Right lobe of liver (tissue), 6 donors: ENCODE measurements at regions of chr7 and their contacts with region 1.

Region 1: DNA sequence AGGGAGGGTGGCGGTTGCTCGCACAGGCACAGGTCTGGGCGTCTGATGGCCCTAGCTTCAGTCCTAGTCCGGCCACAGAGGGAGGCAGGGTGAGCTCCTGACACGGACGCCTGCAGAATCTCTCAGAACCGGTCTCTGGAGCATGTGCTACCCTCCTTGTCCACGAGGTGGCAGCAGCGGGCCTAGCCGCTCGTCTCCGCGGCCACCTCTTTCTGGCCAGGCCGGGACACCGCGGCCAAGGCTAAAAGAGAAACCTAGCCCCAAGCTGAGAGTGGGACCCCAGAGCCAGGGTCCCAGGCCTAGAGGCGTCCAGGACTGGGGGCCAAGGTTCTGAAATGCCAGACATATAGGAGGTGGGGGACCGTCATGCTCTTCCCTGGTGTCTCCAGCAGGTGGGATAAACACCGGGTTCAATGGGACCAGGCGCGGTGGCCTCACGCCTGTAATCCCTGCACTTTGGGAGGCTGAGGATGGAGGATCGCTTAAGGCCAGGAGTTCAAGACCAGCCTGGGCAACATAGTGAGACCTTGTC is 3.2 kb upstream of the LAT2 start:
- DNase-seq: peak; percentile 88 to 90 (median 89)
- ATAC-seq: peak; percentile 96 to 97 (median 97)
- H3K4me3 ChIP-seq: peak overlapping the region in 2 of 3 donors; percentile 11 to 28
- H3K27ac ChIP-seq: no peak overlapping the region
- H3K4me1 ChIP-seq: no peaks in the 10 kb centered on the region
- H3K27me3 ChIP-seq: no peaks in the 10 kb centered on the region
- CTCF ChIP-seq: peak; percentile 97 to 98 (median 98)
- POLR2A ChIP-seq: no peak

Region 2: GRCh38 chr7:73865738-73866445 is 340.8 kb before region 1 on chr7:
- intact Hi-C with region 1: loop called in 1 of 2 experiments (anchors 10 kb)
- DNase-seq: no peak
- ATAC-seq: peak; percentile 53 to 70 (median 62)
- H3K4me3 ChIP-seq: no peak overlapping the region
- H3K27ac ChIP-seq: no peak overlapping the region
- H3K4me1 ChIP-seq: peaks cover 0 to 14% (median 5%) of the 10 kb centered on the region in 4 donors
- H3K27me3 ChIP-seq: no peaks in the 10 kb centered on the region
- CTCF ChIP-seq: peak; percentile 70 to 74 (median 71)
- POLR2A ChIP-seq: no peak

Region 3: DNA sequence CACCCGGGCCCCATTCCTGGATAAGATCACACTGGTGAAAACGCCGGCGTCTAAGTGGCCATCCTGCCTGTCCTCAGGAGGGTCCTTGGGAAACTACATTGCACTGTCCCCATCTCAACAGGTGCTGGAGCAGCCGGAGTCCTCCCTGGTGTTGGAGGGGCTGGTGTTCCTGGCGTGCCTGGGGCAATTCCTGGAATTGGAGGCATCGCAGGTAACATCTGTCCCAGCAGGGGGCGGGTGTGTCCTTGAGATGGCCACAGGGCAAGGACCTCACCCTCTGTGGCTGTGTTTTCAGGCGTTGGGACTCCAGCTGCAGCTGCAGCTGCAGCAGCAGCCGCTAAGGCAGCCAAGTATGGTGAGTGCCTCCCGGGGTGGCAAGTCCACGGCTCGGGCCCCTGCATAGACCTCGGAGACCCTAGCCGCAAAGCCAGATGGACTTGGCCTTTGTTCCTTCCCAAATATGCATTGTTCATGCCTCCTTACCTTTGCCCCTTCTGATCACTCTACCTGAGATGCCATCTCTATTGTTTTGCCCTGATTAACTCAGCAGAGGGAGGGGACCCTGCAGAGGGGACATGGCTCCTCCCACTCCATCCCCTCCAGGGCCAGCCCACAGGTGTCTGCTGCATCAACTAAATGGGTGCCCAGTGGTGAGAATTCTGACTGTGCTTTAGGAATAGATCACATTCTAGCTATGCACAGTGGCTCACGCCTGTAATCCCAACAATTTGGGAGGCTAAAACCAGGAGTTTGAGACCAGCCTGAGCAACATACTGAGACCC is 154.8 kb before region 1 on chr7:
- intact Hi-C with region 1: loop called in 1 of 2 experiments (anchors 10 kb)
- DNase-seq: peak in 2 of 3 donors; percentile 59 to 62
- ATAC-seq: peak; percentile 57 to 78 (median 68)
- H3K4me3 ChIP-seq: no peak overlapping the region
- H3K27ac ChIP-seq: no peak overlapping the region
- H3K4me1 ChIP-seq: no peaks in the 10 kb centered on the region
- H3K27me3 ChIP-seq: no peaks in the 10 kb centered on the region
- CTCF ChIP-seq: peak in 3 of 4 donors; percentile 29 to 41 (median 33)
- POLR2A ChIP-seq: no peak

Region 4: DNA sequence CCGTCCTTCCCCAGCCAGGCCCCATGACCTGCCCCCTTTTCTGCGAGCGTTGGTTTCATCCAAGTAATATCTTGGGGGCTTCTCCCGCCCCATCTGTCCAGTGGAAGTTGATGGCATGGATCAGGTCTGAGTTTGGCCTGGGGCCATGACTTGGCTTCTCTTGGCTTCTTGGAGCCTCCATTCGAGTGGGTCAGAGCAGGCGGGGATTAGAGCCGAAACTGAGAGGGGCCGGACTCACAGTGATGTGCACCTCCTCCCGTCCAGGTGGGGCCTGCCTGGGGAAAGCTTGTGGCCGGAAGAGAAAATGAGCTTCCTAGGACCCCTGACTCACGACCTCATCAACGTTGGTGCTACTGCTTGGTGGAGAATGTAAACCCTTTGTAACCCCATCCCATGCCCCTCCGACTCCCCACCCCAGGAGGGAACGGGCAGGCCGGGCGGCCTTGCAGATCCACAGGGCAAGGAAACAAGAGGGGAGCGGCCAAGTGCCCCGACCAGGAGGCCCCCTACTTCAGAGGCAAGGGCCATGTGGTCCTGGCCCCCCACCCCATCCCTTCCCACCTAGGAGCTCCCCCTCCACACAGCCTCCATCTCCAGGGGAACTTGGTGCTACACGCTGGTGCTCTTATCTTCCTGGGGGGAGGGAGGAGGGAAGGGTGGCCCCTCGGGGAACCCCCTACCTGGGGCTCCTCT is 138.1 kb before region 1 on chr7:
- intact Hi-C with region 1: loop called in 1 of 2 experiments (anchors 10 kb)
- DNase-seq: peak in 1 of 3 donors; percentile 52
- ATAC-seq: no peak
- H3K4me3 ChIP-seq: no peak overlapping the region
- H3K27ac ChIP-seq: no peak overlapping the region
- H3K4me1 ChIP-seq: no peaks in the 10 kb centered on the region
- H3K27me3 ChIP-seq: no peaks in the 10 kb centered on the region
- CTCF ChIP-seq: no peak
- POLR2A ChIP-seq: no peak

Region 5: DNA sequence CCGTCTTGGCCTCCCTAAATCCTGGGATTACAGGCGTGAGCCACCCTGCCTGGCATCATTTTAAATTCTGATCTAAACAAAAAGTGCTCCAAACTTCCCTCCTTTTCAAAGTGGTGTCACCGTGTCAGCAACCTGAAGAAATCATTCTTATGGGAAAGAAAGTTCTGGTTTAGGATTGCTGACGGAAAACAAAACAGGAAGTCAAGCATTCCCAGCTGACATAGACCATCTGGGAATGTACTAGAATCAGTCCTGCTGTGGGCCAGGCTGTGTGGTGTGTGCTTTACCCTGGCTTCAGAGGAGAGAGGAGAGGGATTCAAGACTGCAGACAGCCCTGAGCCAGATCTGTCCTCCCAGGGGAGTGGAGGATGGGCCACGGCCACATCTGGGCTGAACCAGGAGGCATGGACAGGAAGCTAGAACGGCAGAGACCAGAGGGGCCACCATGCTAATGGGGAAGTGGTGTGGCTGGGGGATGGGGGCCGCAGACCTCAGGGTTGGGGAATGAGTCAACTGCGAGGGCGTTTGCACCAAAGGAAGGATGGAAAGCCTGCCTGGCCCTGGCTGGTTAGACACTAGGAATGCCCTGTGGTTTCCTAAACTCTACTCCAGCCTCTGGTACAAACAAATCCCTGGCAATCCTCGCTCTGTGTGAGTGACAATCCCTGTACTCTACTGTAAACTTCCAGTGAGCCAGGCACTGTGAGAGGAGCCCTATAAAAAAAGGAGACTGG is 65.8 kb after region 1 on chr7:
- intact Hi-C with region 1: loop called in 1 of 2 experiments (anchors 10 kb)
- DNase-seq: peak in 2 of 3 donors; percentile 59 to 66
- ATAC-seq: peak; percentile 40 to 79 (median 66)
- H3K4me3 ChIP-seq: no peak overlapping the region
- H3K27ac ChIP-seq: peak overlapping the region; percentile 62 to 67 (median 66)
- H3K4me1 ChIP-seq: peaks cover 0 to 6% (median 0%) of the 10 kb centered on the region in 4 donors
- H3K27me3 ChIP-seq: no peaks in the 10 kb centered on the region
- CTCF ChIP-seq: no peak
- POLR2A ChIP-seq: peak; percentile 16

Region 6: GRCh38 chr7:74401137-74401859 is 194.6 kb after region 1 on chr7:
- intact Hi-C with region 1: loop called (anchors 5 kb)
- DNase-seq: peak; percentile 63 to 72 (median 71)
- ATAC-seq: peak; percentile 77 to 92 (median 86)
- H3K4me3 ChIP-seq: no peak overlapping the region
- H3K27ac ChIP-seq: no peak overlapping the region
- H3K4me1 ChIP-seq: no peaks in the 10 kb centered on the region
- H3K27me3 ChIP-seq: no peaks in the 10 kb centered on the region
- CTCF ChIP-seq: peak; percentile 89 to 99 (median 96)
- POLR2A ChIP-seq: no peak